ENCODE measurements at regions of chr11 and their contacts with region 1.

Region 1: GRCh38 chr11:95067039-95067840 is 521 bp downstream of the SRSF8 start:
- DNase-seq: peak; percentile 88 to 95
- H3K4me3 ChIP-seq: peak overlapping the region; percentile 46
- H3K4me3 Mint-ChIP-seq: peak overlapping the region; percentile 100
- H3K27ac Mint-ChIP-seq: peak overlapping the region; percentile 99
- H3K4me1 ChIP-seq: peaks cover 12% of the 10 kb centered on the region
- H3K4me1 Mint-ChIP-seq: peaks cover 15% of the 10 kb centered on the region
- H3K27me3 ChIP-seq: no peaks in the 10 kb centered on the region
- H3K27me3 Mint-ChIP-seq: peaks cover 12% of the 10 kb centered on the region
- CTCF ChIP-seq: peak; percentile 52 to 98

Region 2: DNA sequence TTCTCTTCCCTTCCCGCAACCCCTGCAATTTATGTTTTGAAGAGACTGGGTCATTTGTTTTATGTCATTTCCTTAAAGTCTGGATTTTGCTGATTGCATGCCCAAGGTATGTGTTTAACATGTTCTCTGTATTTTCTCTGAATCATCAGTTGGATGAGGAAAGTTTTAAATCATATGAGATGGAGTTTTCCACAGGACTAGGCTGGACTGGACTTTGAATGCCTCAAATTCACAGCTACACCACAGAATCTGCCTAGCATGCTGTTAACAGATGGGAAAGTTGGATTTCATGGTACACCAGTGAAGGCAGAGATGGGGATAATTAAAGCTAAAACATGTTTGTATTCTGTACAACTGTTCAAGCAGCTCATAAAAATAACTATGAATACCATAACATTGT is 156.5 kb before region 1 on chr11:
- CTCF ChIA-PET with region 1: no interaction called
- POLR2A ChIA-PET with region 1: no interaction called
- intact Hi-C with region 1: no loop called
- DNase-seq: no peak
- H3K4me3 ChIP-seq: no peak overlapping the region
- H3K4me3 Mint-ChIP-seq: no peak overlapping the region
- H3K27ac Mint-ChIP-seq: no peak overlapping the region
- H3K4me1 ChIP-seq: peaks cover 10% of the 10 kb centered on the region
- H3K4me1 Mint-ChIP-seq: peaks cover 12% of the 10 kb centered on the region
- H3K27me3 ChIP-seq: no peaks in the 10 kb centered on the region
- H3K27me3 Mint-ChIP-seq: no peaks in the 10 kb centered on the region
- CTCF ChIP-seq: no peak

Region 3: GRCh38 chr11:94973099-94973968 is 93.9 kb before region 1 on chr11 and contains the starts of genes CWC15 and KDM4D:
- CTCF ChIA-PET with region 1: interaction called, 9 read pairs
- POLR2A ChIA-PET with region 1: interaction called, 23 read pairs
- intact Hi-C with region 1: loop called (anchors 1 kb)
- DNase-seq: peak; percentile 97
- H3K4me3 ChIP-seq: peak within 1 kb of the TSS; percentile 56
- H3K4me3 Mint-ChIP-seq: peak within 1 kb of the TSS; percentile 89
- H3K27ac Mint-ChIP-seq: peak within 1 kb of the TSS; percentile 94
- H3K4me1 ChIP-seq: peaks cover 9% of the 10 kb centered on the region; the same call in 1 of the 2 replicates
- H3K4me1 Mint-ChIP-seq: peaks cover 25% of the 10 kb centered on the region
- H3K27me3 ChIP-seq: no peaks in the 10 kb centered on the region
- H3K27me3 Mint-ChIP-seq: no peaks in the 10 kb centered on the region
- CTCF ChIP-seq: no peak
- total RNA-seq, gene CWC15: 137 and 144 TPM in 2 replicates
- total RNA-seq, gene KDM4D: 0.95 and 1.2 TPM in 2 replicates

Region 4: DNA sequence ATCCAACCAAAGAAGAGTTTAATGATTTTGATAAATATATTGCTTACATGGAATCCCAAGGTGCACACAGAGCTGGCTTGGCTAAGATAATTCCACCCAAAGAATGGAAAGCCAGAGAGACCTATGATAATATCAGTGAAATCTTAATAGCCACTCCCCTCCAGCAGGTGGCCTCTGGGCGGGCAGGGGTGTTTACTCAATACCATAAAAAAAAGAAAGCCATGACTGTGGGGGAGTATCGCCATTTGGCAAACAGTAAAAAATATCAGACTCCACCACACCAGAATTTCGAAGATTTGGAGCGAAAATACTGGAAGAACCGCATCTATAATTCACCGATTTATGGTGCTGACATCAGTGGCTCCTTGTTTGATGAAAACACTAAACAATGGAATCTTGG is 69.8 kb before region 1 on chr11:
- CTCF ChIA-PET with region 1: no interaction called
- POLR2A ChIA-PET with region 1: no interaction called
- intact Hi-C with region 1: no loop called
- DNase-seq: peak in 1 of 2 experiments; percentile 54
- H3K4me3 ChIP-seq: no peak overlapping the region
- H3K4me3 Mint-ChIP-seq: no peak overlapping the region
- H3K27ac Mint-ChIP-seq: no peak overlapping the region
- H3K4me1 ChIP-seq: 0 out of 2 replicates have a peak, but pooled peaks cover 4% of the 10 kb centered on the region
- H3K4me1 Mint-ChIP-seq: no peaks in the 10 kb centered on the region
- H3K27me3 ChIP-seq: no peaks in the 10 kb centered on the region
- H3K27me3 Mint-ChIP-seq: peaks cover 3% of the 10 kb centered on the region
- CTCF ChIP-seq: peak; percentile 46 to 58

Region 5: GRCh38 chr11:95035316-95035715 is 31.9 kb before region 1 on chr11:
- CTCF ChIA-PET with region 1: no interaction called
- POLR2A ChIA-PET with region 1: no interaction called
- intact Hi-C with region 1: no loop called
- DNase-seq: no peak
- H3K4me3 ChIP-seq: no peak overlapping the region
- H3K4me3 Mint-ChIP-seq: no peak overlapping the region
- H3K27ac Mint-ChIP-seq: no peak overlapping the region
- H3K4me1 ChIP-seq: no peaks in the 10 kb centered on the region
- H3K4me1 Mint-ChIP-seq: no peaks in the 10 kb centered on the region
- H3K27me3 ChIP-seq: no peaks in the 10 kb centered on the region; the same call in 1 of the 2 replicates
- H3K27me3 Mint-ChIP-seq: peaks cover 16% of the 10 kb centered on the region
- CTCF ChIP-seq: no peak

Region 6: DNA sequence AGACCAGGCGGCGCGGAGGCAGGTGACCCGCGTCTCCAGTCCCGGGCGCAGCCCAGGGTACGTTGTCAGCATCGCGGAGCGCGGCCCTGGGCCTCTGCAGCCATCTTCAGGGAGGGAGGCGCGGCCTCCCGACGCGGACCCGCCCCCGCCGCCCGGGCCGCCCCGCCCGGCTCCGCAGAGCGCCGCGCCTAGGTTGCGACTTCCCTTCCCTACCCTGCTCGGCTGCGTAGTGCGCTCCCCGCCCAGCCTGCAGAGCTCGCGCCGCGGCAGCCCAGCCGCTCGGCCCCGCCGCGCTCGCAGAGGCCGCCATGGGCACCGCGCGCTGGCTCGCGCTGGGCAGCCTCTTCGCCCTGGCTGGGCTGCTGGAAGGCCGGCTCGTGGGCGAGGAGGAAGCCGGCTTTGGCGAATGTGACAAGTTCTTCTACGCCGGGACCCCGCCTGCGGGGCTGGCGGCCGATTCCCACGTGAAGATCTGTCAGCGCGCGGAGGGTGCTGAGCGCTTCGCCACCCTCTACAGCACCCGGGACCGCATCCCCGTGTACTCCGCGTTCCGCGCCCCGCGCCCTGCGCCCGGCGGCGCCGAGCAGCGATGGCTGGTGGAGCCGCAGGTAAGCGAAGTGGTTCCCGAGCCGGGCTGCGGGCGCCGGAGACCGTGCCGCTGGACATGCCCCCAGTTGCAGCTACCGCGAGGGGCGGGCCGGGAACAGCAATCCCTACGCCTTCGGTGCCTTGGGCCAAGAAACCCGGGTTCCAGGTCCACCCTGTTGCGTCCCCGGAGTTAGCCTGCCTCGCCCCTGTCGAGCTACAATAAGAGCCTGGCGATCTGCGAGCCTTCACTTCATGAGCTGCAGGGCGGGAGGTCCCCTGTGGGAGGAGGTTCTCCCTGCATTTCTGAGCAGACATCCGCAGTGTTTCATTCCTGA is 22.6 kb after region 1 on chr11 and contains the start of gene ENDOD1:
- CTCF ChIA-PET with region 1: interaction called, 41 read pairs
- POLR2A ChIA-PET with region 1: interaction called, 62 read pairs
- intact Hi-C with region 1: loop called (anchors 1 kb)
- DNase-seq: peak; percentile 89 to 93
- H3K4me3 ChIP-seq: peak within 1 kb of the TSS; percentile 91
- H3K4me3 Mint-ChIP-seq: peak within 1 kb of the TSS; percentile 89
- H3K27ac Mint-ChIP-seq: peak within 1 kb of the TSS; percentile 71
- H3K4me1 ChIP-seq: peaks cover 47% of the 10 kb centered on the region
- H3K4me1 Mint-ChIP-seq: peaks cover 29% of the 10 kb centered on the region
- H3K27me3 ChIP-seq: no peaks in the 10 kb centered on the region
- H3K27me3 Mint-ChIP-seq: peaks cover 5% of the 10 kb centered on the region
- CTCF ChIP-seq: peak; percentile 24 to 40
- total RNA-seq, gene ENDOD1: 22.7 and 23.0 TPM in 2 replicates

Region 7: GRCh38 chr11:95231127-95231880 is 164.1 kb after region 1 on chr11 and contains the start of gene SESN3:
- CTCF ChIA-PET with region 1: interaction called, 17 read pairs
- POLR2A ChIA-PET with region 1: interaction called, 5 read pairs
- intact Hi-C with region 1: no loop called
- DNase-seq: peak; percentile 100
- H3K4me3 ChIP-seq: peak within 1 kb of the TSS; percentile 86
- H3K4me3 Mint-ChIP-seq: no peak within 1 kb of the TSS
- H3K27ac Mint-ChIP-seq: peak within 1 kb of the TSS; percentile 29
- H3K4me1 ChIP-seq: peaks cover 7% of the 10 kb centered on the region; the same call in 1 of the 2 replicates
- H3K4me1 Mint-ChIP-seq: peaks cover 6% of the 10 kb centered on the region
- H3K27me3 ChIP-seq: no peaks in the 10 kb centered on the region
- H3K27me3 Mint-ChIP-seq: no peaks in the 10 kb centered on the region
- CTCF ChIP-seq: no peak
- total RNA-seq, gene SESN3: 28.2 and 29.2 TPM in 2 replicates

Region 8: DNA sequence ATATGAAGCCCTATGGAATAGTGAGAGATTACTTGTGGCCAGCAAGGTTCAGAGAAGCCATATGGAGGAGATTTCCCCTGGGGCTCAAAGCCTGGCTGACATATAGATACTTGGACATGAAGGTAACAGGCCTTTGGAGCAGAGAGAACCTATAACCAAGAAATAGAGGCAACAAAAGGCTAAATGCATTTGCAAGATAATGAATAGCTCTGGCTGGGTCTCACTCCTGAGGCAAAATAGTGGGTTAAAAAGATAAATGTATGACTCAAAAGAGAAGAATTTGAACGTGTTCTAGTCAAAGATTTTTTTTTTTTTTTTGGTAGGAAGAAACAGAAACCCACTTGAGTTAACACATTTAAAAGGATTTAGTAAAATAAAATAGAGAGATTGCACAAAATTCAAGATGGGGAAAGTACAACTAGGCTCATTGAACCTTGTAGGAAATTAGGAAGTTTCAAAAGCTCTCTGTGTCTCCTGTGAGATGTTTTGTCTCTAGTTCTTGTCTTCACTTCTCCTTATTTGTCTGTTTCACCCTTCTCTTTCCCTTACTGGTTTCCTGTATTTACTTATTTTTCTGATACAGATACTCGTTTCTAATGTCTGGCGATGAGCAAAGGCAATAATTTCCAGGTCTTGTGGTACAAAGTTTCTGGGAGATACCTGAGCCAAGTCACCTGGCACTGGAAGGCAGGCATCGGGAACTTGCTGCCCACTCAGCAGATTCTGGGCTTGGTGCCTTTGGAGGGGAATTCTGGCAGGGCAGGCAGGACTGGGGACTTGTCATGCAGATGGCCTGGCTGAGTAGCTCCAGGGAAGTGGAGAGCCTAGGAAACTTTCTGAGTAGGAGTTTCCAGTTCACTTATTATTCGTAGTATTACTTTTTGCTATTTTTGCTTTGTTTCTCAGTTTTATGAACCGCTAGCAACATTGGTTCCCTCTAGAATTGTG is 213.0 kb after region 1 on chr11:
- CTCF ChIA-PET with region 1: no interaction called
- POLR2A ChIA-PET with region 1: no interaction called
- intact Hi-C with region 1: no loop called
- DNase-seq: no peak
- H3K4me3 ChIP-seq: no peak overlapping the region
- H3K4me3 Mint-ChIP-seq: peak overlapping the region; percentile 31
- H3K27ac Mint-ChIP-seq: peak overlapping the region; percentile 83
- H3K4me1 ChIP-seq: peaks cover 68% of the 10 kb centered on the region
- H3K4me1 Mint-ChIP-seq: peaks cover 52% of the 10 kb centered on the region
- H3K27me3 ChIP-seq: no peaks in the 10 kb centered on the region
- H3K27me3 Mint-ChIP-seq: no peaks in the 10 kb centered on the region
- CTCF ChIP-seq: no peak

Region 9: DNA sequence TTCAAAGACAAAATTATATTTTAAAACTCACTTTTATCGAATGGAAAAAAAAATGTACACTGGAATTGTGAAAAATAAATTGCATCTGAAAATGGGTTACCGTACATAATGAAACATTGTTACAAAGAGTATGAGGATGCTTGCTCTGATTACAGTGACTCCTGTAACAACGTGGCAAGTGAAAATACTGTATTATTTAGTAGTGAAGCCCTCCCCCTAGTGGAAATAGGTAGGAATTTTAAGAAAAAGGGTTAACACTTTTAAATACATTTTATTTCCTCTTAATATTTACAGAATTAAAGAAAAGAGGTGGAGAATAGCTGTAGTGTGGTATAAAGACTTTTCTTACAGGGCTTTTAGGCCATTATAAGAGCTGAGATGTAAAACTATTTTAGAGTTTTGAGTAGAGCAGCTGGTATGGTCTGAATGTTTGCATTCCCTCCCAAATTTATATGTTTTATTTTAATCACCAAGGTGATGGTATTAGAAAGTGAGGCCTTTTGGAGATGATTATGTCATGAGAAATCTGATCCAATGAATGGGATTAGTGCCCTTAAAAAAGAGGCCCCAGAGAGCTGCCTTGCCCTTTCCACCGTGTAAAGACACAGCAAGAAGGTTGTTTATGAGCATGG is 697.1 kb after region 1 on chr11:
- CTCF ChIA-PET with region 1: interaction called, 3 read pairs
- POLR2A ChIA-PET with region 1: no interaction called
- intact Hi-C with region 1: loop called (anchors 2 kb)
- DNase-seq: peak in 1 of 2 experiments; percentile 56
- H3K4me3 ChIP-seq: no peak overlapping the region
- H3K4me3 Mint-ChIP-seq: no peak overlapping the region
- H3K27ac Mint-ChIP-seq: no peak overlapping the region
- H3K4me1 ChIP-seq: peaks cover 7% of the 10 kb centered on the region; the same call in 1 of the 2 replicates
- H3K4me1 Mint-ChIP-seq: peaks cover 6% of the 10 kb centered on the region
- H3K27me3 ChIP-seq: no peaks in the 10 kb centered on the region
- H3K27me3 Mint-ChIP-seq: peaks cover 8% of the 10 kb centered on the region
- CTCF ChIP-seq: peak; percentile 56 to 91

Region 10: GRCh38 chr11:96424693-96425092 is 1357.5 kb after region 1 on chr11:
- CTCF ChIA-PET with region 1: no interaction called
- POLR2A ChIA-PET with region 1: no interaction called
- intact Hi-C with region 1: loop called (anchors 10 kb)
- DNase-seq: no peak
- H3K4me3 ChIP-seq: no peak overlapping the region
- H3K4me3 Mint-ChIP-seq: no peak overlapping the region
- H3K27ac Mint-ChIP-seq: no peak overlapping the region
- H3K4me1 ChIP-seq: peaks cover 5% of the 10 kb centered on the region; the same call in 1 of the 2 replicates
- H3K4me1 Mint-ChIP-seq: no peaks in the 10 kb centered on the region
- H3K27me3 ChIP-seq: no peaks in the 10 kb centered on the region; the same call in 1 of the 2 replicates
- H3K27me3 Mint-ChIP-seq: peaks cover 19% of the 10 kb centered on the region
- CTCF ChIP-seq: no peak

Measured in Caco-2 (cell line).